PC-3 (cell line): ENCODE measurements at regions of chr1 and their contacts with region 1.

Region 1: DNA sequence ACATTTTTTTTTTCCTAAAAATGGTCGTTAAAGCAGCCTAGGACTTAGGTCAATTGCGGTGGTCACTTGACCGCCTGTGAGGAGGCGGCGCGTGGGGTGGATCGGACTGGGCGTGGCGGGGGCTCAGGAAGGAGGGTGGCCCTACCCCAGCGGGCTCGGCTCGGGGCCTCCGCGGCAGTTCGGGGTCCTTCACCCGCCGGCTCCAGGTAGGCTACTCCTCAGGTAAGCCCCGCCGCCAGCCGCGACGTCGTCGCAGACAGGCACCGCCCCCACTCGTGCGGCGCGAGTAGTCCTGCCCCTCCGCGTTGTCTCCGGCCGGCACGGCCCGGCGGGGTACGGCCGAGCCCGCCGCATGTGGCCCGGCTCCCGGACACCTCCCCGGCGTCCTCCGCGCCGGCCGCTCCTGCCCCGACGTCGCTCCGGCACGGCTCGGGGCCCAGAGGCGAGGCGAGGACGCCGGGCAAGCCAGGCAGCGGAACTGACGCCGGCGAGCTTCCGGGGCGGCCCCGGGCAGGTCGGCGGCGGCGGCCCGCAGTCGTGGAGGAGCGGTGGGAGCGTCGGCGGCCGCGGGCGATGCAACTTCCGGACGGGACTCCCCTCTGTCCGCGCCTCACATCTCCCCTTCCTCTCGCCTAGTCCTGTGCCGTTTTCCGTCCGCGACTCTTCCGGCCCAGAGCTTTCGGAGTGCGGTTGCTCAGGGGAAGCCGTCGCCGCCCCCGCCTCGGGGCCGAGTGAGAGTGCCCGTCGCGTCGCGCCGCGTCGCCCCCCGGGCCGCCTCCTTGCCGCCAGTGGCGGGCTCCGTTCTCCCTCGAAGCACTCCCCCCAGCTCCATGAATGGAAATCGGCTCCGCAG is at the start of gene AGO3:
- DNase-seq: peak; percentile 84
- ATAC-seq: peak; percentile 86
- H3K4me3 ChIP-seq: peak within 1 kb of the TSS; percentile 91
- H3K27ac ChIP-seq: peak within 1 kb of the TSS; percentile 91
- H3K4me1 ChIP-seq: peaks cover 25% of the 10 kb centered on the region
- H3K27me3 ChIP-seq: no peaks in the 10 kb centered on the region
- CTCF ChIP-seq: no peak
- total RNA-seq, gene AGO3: 17.7 and 26.3 TPM in 2 replicates

Region 2: GRCh38 chr1:35832276-35832905 is 98.4 kb before region 1 on chr1:
- CTCF ChIA-PET with region 1: no interaction called
- POLR2A ChIA-PET with region 1: interaction called, 11 read pairs
- intact Hi-C with region 1: no loop called
- DNase-seq: peak; percentile 9
- ATAC-seq: peak; percentile 57; the same call in 1 of the 2 replicates
- H3K4me3 ChIP-seq: no peak overlapping the region
- H3K27ac ChIP-seq: no peak overlapping the region
- H3K4me1 ChIP-seq: no peaks in the 10 kb centered on the region
- H3K27me3 ChIP-seq: no peaks in the 10 kb centered on the region
- CTCF ChIP-seq: no peak

Region 3: DNA sequence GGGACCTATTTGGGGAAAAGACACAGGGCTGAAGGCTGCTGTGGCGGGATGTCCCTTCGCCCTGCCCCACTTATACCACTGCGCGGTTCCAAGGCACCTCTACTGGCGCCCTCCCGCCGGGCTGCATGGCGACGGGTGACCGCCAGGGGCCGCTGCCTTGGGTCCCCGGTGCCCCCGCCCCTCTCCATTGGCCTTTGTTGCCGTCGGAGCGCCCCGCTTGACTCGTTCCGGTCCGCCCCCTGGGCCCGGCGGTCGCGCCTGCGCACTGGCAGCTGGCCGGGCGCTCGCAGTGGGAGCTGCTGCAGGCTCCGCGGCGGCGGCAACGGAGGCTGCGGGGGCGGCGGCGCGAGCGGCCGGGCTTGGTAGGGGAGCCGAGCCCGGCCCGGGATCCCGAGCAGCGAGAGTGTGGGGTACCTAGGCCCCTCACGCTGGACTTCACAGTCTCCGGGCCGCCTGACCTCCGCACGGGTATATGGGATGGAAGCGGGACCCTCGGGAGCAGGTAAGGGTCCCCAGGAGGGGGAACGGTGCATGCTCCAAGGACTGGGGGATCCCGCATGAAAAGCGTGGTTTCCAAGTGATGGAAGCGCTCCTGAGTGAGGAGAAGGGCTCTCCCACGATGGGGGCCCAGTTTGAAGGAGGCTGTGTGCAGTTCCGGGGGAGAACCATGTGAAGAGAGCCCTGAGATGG is 47.7 kb before region 1 on chr1 and contains the start of gene AGO1:
- CTCF ChIA-PET with region 1: no interaction called
- POLR2A ChIA-PET with region 1: no interaction called
- intact Hi-C with region 1: no loop called
- DNase-seq: peak; percentile 92
- ATAC-seq: peak; percentile 84
- H3K4me3 ChIP-seq: peak within 1 kb of the TSS; percentile 99
- H3K27ac ChIP-seq: no peak within 1 kb of the TSS
- H3K4me1 ChIP-seq: peaks cover 8% of the 10 kb centered on the region; the same call in 1 of the 2 replicates
- H3K27me3 ChIP-seq: no peaks in the 10 kb centered on the region
- CTCF ChIP-seq: peak; percentile 81
- total RNA-seq, gene AGO1: 15.4 and 17.0 TPM in 2 replicates

Region 4: DNA sequence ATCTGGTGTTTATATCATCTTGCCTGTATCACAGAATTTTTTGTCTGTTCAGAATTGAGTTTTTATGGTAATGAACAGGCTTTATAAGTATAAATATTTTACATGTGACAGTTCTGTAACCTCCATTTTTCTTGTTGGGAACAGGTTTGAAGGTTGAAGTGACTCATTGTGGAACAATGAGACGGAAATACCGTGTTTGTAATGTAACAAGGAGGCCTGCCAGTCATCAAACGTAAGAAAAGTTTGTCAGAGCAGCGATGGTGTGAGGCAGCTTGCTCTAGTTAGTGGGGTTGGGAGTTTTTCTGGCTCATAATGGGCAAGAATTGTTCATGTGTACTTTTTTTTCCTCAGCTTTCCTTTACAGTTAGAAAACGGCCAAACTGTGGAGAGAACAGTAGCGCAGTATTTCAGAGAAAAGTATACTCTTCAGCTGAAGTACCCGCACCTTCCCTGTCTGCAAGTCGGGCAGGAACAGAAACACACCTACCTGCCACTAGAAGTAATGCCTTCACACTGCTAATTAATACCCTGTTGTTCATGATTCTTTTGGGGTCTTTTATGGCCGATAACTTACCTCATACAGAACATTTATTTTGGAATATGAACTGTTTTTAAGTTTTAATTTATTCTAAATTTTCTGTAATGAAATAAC is 77.9 kb after region 1 on chr1:
- CTCF ChIA-PET with region 1: no interaction called
- POLR2A ChIA-PET with region 1: no interaction called
- intact Hi-C with region 1: loop called (anchors 2 kb)
- DNase-seq: peak; percentile 89
- ATAC-seq: peak; percentile 100
- H3K4me3 ChIP-seq: no peak overlapping the region
- H3K27ac ChIP-seq: peak overlapping the region; percentile 29
- H3K4me1 ChIP-seq: peaks cover 16% of the 10 kb centered on the region
- H3K27me3 ChIP-seq: no peaks in the 10 kb centered on the region
- CTCF ChIP-seq: no peak

Region 5: GRCh38 chr1:36088575-36089443 is 158.0 kb after region 1 on chr1 and contains the start of gene ADPRS:
- CTCF ChIA-PET with region 1: interaction called, 3 read pairs
- POLR2A ChIA-PET with region 1: no interaction called
- intact Hi-C with region 1: loop called (anchors 10 kb)
- DNase-seq: peak; percentile 88
- ATAC-seq: peak; percentile 91
- H3K4me3 ChIP-seq: peak within 1 kb of the TSS; percentile 99
- H3K27ac ChIP-seq: peak within 1 kb of the TSS; percentile 50
- H3K4me1 ChIP-seq: peaks cover 13% of the 10 kb centered on the region; the same call in 1 of the 2 replicates
- H3K27me3 ChIP-seq: no peaks in the 10 kb centered on the region
- CTCF ChIP-seq: peak; percentile 95
- total RNA-seq, gene ADPRS: 75.9 and 83.0 TPM in 2 replicates